ENCODE measurements at regions of chr22 and their contacts with region 1.

Region 1: DNA sequence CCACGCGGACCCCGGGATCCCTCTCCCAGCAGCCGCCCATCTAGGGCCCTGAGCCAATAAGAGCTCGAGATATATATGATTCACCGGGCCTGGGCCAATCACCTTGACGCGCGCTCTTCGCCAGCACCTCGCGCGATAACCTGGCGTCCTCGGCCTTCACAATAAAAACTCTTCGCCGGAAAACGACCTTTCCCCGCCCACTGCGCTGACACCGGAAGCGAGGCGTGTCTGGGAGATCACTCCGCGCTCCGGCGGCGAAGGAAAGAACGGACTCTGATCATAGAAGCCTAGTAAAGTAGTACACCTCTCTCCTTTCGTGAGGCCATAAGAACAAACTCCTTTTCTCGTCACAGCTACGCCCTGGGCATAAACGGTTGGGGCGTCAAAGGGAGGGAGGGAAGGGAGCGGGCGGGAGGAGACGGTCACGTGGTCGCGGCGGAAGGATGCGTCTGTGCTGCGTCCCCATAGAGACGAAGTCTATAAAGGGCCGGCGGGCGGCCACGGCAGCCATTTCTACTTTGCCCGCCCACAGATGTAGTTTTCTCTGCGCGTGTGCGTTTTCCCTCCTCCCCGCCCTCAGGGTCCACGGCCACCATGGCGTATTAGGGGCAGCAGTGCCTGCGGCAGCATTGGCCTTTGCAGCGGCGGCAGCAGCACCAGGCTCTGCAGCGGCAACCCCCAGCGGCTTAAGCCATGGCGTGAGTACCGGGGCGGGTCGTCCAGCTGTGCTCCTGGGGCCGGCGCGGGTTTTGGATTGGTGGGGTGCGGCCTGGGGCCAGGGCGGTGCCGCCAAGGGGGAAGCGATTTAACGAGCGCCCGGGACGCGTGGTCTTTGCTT is at the start of gene ATF4:
- DNase-seq: peak; percentile 88 to 97 (median 92)
- ATAC-seq: peak; percentile 87
- H3K4me3 ChIP-seq: peak within 1 kb of the TSS; percentile 99
- H3K27ac ChIP-seq: peak within 1 kb of the TSS; percentile 100
- H3K4me1 ChIP-seq: peaks cover 23 to 34% of the 10 kb centered on the region in 2 experiments; a peak in 4 of 5 replicates
- H3K27me3 ChIP-seq: no peaks in the 10 kb centered on the region
- CTCF ChIP-seq: no peak
- EP300 ChIP-seq: no peak; the same call in 1 of the 2 replicates
- POLR2A ChIP-seq: peak; percentile 99
- RAD21 ChIP-seq: no peak; a peak in 1 of 4 replicates
- polyA plus RNA-seq, gene ATF4: 93.1 to 125 TPM

Region 2: GRCh38 chr22:39388261-39389011 is 131.8 kb before region 1 on chr22:
- CTCF ChIA-PET with region 1: no interaction called
- POLR2A ChIA-PET with region 1: interaction called, 5 read pairs
- in situ Hi-C with region 1: no loop called
- intact Hi-C with region 1: loop called (anchors 5 kb)
- DNase-seq: peak; percentile 90 to 98 (median 96)
- ATAC-seq: peak; percentile 99
- H3K4me3 ChIP-seq: peak overlapping the region; percentile 38
- H3K27ac ChIP-seq: no peak overlapping the region
- H3K4me1 ChIP-seq: peaks cover 0 to 25% of the 10 kb centered on the region in 2 experiments; a peak in 3 of 5 replicates
- H3K27me3 ChIP-seq: no peaks in the 10 kb centered on the region
- CTCF ChIP-seq: no peak
- EP300 ChIP-seq: no peak
- POLR2A ChIP-seq: no peak
- RAD21 ChIP-seq: no peak

Region 3: DNA sequence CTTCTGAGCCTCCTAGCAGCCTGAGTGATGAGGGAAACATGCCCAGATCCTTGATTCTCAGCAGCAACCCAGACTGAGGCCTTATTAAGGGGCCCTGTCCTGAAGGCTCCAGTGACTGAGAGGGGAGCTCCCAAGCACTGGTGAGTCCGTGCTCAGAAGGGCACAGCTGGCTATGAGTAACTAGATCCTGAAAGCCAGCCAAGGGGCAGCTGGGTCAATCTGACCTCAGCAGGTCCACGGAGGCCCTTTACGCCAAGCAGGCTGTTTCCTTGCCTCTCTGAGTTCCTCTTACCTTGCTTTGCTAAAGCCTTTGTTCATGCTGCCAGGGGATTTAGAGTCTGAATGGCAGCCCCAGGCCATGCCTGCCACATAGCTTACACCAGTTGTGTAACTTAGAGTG is 37.5 kb before region 1 on chr22:
- CTCF ChIA-PET with region 1: no interaction called
- POLR2A ChIA-PET with region 1: interaction called, 17 read pairs
- in situ Hi-C with region 1: no loop called
- intact Hi-C with region 1: no loop called
- DNase-seq: no peak
- ATAC-seq: no peak
- H3K4me3 ChIP-seq: no peak overlapping the region
- H3K27ac ChIP-seq: no peak overlapping the region
- H3K4me1 ChIP-seq: peaks cover 7 to 48% of the 10 kb centered on the region in 2 experiments; a peak in 4 of 5 replicates
- H3K27me3 ChIP-seq: no peaks in the 10 kb centered on the region
- CTCF ChIP-seq: no peak
- EP300 ChIP-seq: no peak
- POLR2A ChIP-seq: no peak
- RAD21 ChIP-seq: no peak

Region 4: DNA sequence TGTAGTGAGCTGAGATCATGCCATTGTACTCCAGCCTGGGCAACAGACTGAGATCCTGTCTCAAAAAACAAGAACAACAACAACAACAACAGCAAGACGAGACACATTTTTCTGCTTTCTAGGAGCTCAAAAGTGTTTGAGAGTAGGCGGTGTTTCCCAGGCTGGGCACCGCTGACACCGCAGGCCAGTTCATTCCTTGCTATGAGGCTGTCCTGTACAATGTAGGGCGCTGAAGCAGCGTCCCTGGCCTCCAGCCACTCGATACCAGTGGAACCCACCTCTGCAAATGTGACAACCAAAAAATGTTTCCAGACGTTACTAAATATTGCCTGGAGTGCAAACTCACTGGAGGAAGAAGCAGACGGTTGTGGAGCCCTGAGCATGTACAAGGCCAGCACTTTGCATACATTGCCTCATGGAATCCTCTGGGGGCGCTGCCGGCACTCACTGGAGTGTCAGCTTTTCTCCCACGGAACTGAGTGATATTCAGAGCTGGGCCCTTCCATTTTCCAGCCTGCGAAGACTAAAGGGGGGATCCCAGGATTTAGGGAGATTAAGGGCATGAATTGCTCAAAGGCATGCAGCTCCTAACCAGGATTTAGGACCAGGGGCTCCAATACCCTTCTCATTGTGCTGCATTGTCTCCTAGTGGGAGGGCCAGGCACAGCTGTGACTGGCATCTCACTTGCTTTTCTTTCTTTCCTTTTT is 24.0 kb before region 1 on chr22:
- CTCF ChIA-PET with region 1: interaction called, 8 read pairs
- POLR2A ChIA-PET with region 1: interaction called, 106 read pairs
- in situ Hi-C with region 1: no loop called
- intact Hi-C with region 1: loop called (anchors 2 kb)
- DNase-seq: peak; percentile 37 to 85 (median 48)
- ATAC-seq: peak; percentile 91
- H3K4me3 ChIP-seq: no peak overlapping the region
- H3K27ac ChIP-seq: peak overlapping the region; percentile 44; the same call in 2 of the 3 replicates
- H3K4me1 ChIP-seq: peaks cover 18 to 25% of the 10 kb centered on the region in 2 experiments
- H3K27me3 ChIP-seq: no peaks in the 10 kb centered on the region
- CTCF ChIP-seq: peak; percentile 77 to 84 (median 82)
- EP300 ChIP-seq: no peak
- POLR2A ChIP-seq: no peak
- RAD21 ChIP-seq: peak; percentile 16 to 51; a peak in 2 of 4 replicates

Region 5: DNA sequence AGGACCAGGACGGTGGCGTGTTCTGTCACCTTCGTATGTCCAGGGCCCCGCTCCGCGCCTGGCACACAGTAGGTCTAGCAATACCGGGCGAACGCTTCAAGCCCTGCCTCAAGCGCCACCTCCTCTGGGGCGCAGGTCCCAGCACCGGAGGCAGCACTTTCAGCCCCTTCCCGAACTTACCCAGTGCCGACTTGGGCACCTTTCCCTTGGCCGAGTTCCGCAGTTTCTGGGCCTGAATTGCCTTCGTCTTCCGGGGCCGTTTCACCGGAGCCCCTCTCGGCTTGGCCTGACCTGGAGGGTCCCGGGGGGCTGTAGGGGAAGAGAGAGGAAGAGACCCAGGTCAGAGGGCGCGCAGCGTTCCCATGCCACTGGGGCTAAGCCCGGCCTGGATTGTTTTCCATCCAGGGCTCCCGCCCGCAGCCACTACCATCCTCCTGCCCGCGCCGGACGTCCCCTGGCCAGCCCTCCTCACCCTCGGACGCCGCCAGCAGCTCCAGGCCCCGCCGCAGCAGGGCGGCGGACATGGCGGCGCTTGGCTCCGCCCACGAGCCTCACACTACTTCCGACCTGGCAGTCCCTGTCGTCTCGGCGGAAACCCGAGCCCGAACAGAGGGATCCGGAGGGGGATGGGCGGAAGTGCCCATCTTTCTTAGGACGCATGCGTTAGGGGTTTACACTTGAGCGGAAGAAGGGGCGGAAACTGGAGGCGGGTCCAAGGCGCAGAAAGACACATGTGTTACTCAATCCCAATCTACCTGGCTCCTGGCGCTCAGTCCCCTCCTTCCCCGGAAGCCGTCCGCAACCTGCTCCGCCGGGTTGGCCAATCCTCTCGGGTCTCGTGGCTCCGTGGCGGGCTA is 12.2 kb after region 1 on chr22 and contains the start of gene RPS19BP1:
- CTCF ChIA-PET with region 1: no interaction called
- POLR2A ChIA-PET with region 1: interaction called, 35 read pairs
- in situ Hi-C with region 1: no loop called
- intact Hi-C with region 1: no loop called
- DNase-seq: peak; percentile 83 to 99 (median 88)
- ATAC-seq: peak; percentile 89
- H3K4me3 ChIP-seq: peak within 1 kb of the TSS; percentile 97
- H3K27ac ChIP-seq: peak within 1 kb of the TSS; percentile 92
- H3K4me1 ChIP-seq: peaks cover 29 to 58% of the 10 kb centered on the region in 2 experiments; a peak in 4 of 5 replicates
- H3K27me3 ChIP-seq: no peaks in the 10 kb centered on the region
- CTCF ChIP-seq: no peak
- EP300 ChIP-seq: no peak
- POLR2A ChIP-seq: peak; percentile 88
- RAD21 ChIP-seq: no peak
- polyA plus RNA-seq, gene RPS19BP1: 3.0 to 8.2 TPM

Region 6: DNA sequence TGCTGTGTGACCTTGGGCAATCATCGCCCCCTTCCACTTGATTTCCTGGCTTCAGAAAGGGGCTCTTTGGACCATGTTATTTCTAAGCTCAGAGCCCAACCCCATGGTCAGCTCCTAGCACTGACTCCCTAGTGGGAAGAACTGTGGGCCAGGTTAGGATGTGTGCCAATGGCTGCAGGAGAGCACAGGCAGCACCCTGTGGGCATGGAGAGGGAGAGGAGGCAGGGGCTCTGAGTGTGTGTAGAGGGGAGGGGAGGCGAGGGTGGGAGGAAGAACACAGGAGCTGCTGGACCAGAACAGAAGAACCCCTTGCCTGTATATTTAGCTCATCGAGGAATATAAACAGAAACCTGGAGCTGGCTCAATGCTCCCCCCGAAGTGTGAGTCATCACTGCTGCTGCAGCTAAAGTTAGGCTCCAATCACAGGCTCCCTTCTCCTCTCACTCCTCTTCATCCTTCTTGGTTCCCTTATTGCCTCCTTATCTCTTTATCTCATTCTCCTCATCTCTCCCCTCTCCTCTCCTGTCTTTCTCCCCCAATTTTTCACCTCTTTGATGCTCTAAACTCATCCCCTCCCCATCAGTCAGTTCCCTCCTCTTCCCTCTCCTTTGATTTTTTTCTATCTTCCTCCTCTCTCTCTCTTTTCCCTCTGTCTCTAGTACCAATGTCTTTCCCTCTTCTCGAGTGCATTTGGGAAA is 26.8 kb after region 1 on chr22:
- CTCF ChIA-PET with region 1: no interaction called
- POLR2A ChIA-PET with region 1: no interaction called
- in situ Hi-C with region 1: no loop called
- intact Hi-C with region 1: no loop called
- DNase-seq: no peak
- ATAC-seq: no peak
- H3K4me3 ChIP-seq: no peak overlapping the region
- H3K27ac ChIP-seq: no peak overlapping the region
- H3K4me1 ChIP-seq: peaks cover 0 to 6% of the 10 kb centered on the region in 2 experiments; a peak in 1 of 5 replicates
- H3K27me3 ChIP-seq: peaks cover 2 to 32% of the 10 kb centered on the region in 2 experiments; a peak in 3 of 5 replicates
- CTCF ChIP-seq: no peak
- EP300 ChIP-seq: no peak
- POLR2A ChIP-seq: no peak
- RAD21 ChIP-seq: no peak

Region 7: GRCh38 chr22:39598017-39598965 is 78.0 kb after region 1 on chr22:
- CTCF ChIA-PET with region 1: no interaction called
- POLR2A ChIA-PET with region 1: no interaction called
- in situ Hi-C with region 1: no loop called
- intact Hi-C with region 1: no loop called
- DNase-seq: peak; percentile 79 to 98 (median 94)
- ATAC-seq: peak; percentile 99
- H3K4me3 ChIP-seq: no peak overlapping the region
- H3K27ac ChIP-seq: no peak overlapping the region
- H3K4me1 ChIP-seq: peaks cover 0 to 17% of the 10 kb centered on the region in 2 experiments; a peak in 3 of 5 replicates
- H3K27me3 ChIP-seq: no peaks in the 10 kb centered on the region
- CTCF ChIP-seq: peak in 2 of 3 experiments; percentile 23 to 34; a peak in 1 of 6 replicates
- EP300 ChIP-seq: no peak
- POLR2A ChIP-seq: no peak
- RAD21 ChIP-seq: no peak

Region 8: GRCh38 chr22:39677967-39678366 is 157.7 kb after region 1 on chr22:
- CTCF ChIA-PET with region 1: no interaction called
- POLR2A ChIA-PET with region 1: no interaction called
- in situ Hi-C with region 1: no loop called
- intact Hi-C with region 1: no loop called
- DNase-seq: no peak
- ATAC-seq: no peak
- H3K4me3 ChIP-seq: no peak overlapping the region
- H3K27ac ChIP-seq: no peak overlapping the region
- H3K4me1 ChIP-seq: peaks cover 0 to 20% of the 10 kb centered on the region in 2 experiments; a peak in 2 of 5 replicates
- H3K27me3 ChIP-seq: no peaks in the 10 kb centered on the region
- CTCF ChIP-seq: no peak
- EP300 ChIP-seq: no peak
- POLR2A ChIP-seq: no peak
- RAD21 ChIP-seq: no peak